Common myeloid progenitor, CD34-positive (primary cell): ENCODE measurements at regions of chr15 and their contacts with region 1.

Region 1: GRCh38 chr15:81038975-81039607 is 38.4 kb downstream of the TLNRD1 start:
- DNase-seq: peak in 2 of 3 donors; percentile 42 to 53
- H3K4me3 ChIP-seq: peak overlapping the region in 2 of 7 experiments; percentile 11 to 27
- H3K27ac ChIP-seq: no peak overlapping the region
- H3K4me1 ChIP-seq: peaks cover 0 to 27% (median 20%) of the 10 kb centered on the region in 4 experiments
- H3K27me3 ChIP-seq: no peaks in the 10 kb centered on the region

Region 2: DNA sequence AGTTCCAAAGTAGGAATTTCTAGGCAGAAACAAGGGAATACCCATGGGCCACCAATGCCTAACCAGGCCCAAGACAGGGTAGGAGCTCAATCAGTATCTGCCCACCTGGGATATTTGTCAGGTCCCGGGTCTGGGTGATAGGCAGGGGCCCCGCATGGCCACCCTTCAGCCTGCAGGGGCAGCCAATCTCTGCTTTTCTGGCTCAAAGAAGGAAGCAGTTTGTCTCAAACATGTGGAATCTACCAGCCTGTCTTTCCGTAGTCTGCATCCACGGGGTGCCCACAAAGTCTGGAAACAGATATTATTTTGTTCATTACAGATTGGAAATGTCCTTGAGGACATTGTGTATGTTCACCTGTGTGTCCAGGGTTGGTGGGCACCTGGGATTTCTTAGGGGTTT is 203.8 kb before region 1 on chr15:
- CTCF ChIA-PET with region 1: no interaction called
- POLR2A ChIA-PET with region 1: no interaction called
- DNase-seq: no peak
- H3K4me3 ChIP-seq: no peak overlapping the region
- H3K27ac ChIP-seq: no peak overlapping the region
- H3K4me1 ChIP-seq: peaks cover 0 to 1% (median 0%) of the 10 kb centered on the region in 4 experiments
- H3K27me3 ChIP-seq: peaks cover 0 to 3% (median 0%) of the 10 kb centered on the region in 5 experiments

Region 3: GRCh38 chr15:80984856-80985255 is 54.2 kb before region 1 on chr15:
- CTCF ChIA-PET with region 1: no interaction called
- POLR2A ChIA-PET with region 1: no interaction called
- DNase-seq: peak; percentile 81 to 95 (median 93)
- H3K4me3 ChIP-seq: peak overlapping the region in 5 of 7 experiments; percentile 10 to 67 (median 44)
- H3K27ac ChIP-seq: peak overlapping the region; percentile 76 to 84
- H3K4me1 ChIP-seq: peaks cover 12 to 53% (median 37%) of the 10 kb centered on the region in 4 experiments
- H3K27me3 ChIP-seq: no peaks in the 10 kb centered on the region

Region 4: GRCh38 chr15:81049835-81050234 is 10.7 kb after region 1 on chr15:
- CTCF ChIA-PET with region 1: interaction called, 13 read pairs
- POLR2A ChIA-PET with region 1: no interaction called
- DNase-seq: no peak
- H3K4me3 ChIP-seq: no peak overlapping the region
- H3K27ac ChIP-seq: no peak overlapping the region
- H3K4me1 ChIP-seq: peaks cover 0 to 7% (median 5%) of the 10 kb centered on the region in 4 experiments
- H3K27me3 ChIP-seq: no peaks in the 10 kb centered on the region